Lower leg skin (tissue), 4 donors: ENCODE measurements at regions of chr6 and their contacts with region 1.

Region 1: DNA sequence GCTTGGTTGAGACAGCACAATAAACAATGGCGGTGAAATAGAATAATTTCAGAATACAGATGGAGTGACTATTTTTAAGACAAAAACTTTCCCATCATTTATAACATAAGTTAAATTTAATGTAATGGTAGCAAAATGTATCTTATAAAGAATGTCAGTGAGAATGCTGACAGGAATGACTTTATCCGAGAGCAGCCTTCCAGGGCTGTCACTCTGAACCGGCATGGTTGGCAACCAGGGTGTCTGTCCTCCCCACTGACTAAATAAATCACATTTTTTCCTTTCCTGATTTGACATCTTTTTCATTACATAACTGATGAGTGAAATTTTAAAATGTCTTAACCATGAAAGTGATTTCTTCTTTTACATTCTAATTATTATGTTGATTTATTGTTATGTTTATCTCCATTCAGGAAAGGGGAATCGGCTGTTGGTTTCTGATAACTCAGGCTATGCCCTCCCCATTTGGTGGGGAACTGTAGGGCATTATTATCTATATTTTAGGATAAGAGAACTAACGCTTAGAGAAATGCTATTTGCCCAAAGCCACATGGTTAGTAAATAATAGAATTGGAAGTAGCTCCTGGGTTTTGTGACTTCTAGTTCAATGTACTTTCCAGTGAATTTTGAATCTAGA is 109.2 kb upstream of the OGFRL1 start:
- DNase-seq: no peak
- H3K4me3 ChIP-seq: no peak overlapping the region
- CTCF ChIP-seq: no peak
- POLR2A ChIP-seq: no peak

Region 2: GRCh38 chr6:69980624-69981023 is 1198.7 kb before region 1 on chr6:
- intact Hi-C with region 1: loop called (anchors 5 kb)
- DNase-seq: no peak
- H3K4me3 ChIP-seq: no peak overlapping the region
- CTCF ChIP-seq: no peak
- POLR2A ChIP-seq: no peak